CD4-positive, alpha-beta memory T cell (primary cell): ENCODE measurements at regions of chr6 and their contacts with region 1.

Region 1: GRCh38 chr6:105992315-105992961 is 93.7 kb upstream of the PRDM1 start:
- DNase-seq: peak; percentile 89 to 91 (median 91)
- H3K4me3 ChIP-seq: peak overlapping the region; percentile 68 to 90
- H3K4me3 Mint-ChIP-seq: peak overlapping the region; percentile 88 to 98 (median 96)
- H3K27ac ChIP-seq: peak overlapping the region; percentile 72
- H3K27ac Mint-ChIP-seq: peak overlapping the region; percentile 87 to 98 (median 96)
- H3K4me1 ChIP-seq: peaks cover 36% of the 10 kb centered on the region
- H3K4me1 Mint-ChIP-seq: peaks cover 26 to 56% (median 30%) of the 10 kb centered on the region in 4 donors
- H3K27me3 ChIP-seq: peaks cover 4% of the 10 kb centered on the region
- H3K27me3 Mint-ChIP-seq: peaks cover 5 to 12% of the 10 kb centered on the region in 2 donors

Region 2: DNA sequence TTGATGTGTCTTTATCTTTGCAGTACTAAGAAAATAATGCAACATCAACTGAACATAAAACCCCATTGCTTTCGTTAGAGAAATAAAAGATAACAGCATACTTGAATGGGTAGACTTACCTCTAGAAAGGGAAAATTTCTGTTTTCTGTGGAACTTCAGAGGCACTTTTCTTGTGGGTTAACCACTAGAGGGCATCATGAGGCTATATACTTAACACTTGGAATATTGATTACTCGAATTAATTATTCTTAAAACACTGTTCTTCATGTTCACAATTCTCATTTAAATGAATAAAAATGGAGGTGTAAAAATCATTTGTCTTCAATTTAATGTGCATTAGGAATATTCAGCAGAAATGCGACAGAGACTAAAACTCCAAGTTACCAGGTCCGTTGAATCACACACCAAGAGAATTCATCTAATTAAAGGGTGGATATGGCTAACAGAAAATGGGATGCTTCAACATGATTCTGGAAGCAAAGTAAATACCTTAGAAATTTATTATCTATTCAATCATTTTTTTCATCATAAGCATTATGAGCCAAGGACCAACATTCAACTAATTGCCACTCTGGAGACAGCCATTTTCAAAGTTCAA is 258.8 kb before region 1 on chr6:
- CTCF ChIA-PET with region 1: interaction called, 6 read pairs
- POLR2A ChIA-PET with region 1: no interaction called
- intact Hi-C with region 1: loop called (anchors 5 kb)
- DNase-seq: peak in 4 of 5 donors; percentile 39 to 48 (median 42)
- H3K4me3 ChIP-seq: no peak overlapping the region
- H3K4me3 Mint-ChIP-seq: no peak overlapping the region
- H3K27ac ChIP-seq: no peak overlapping the region
- H3K27ac Mint-ChIP-seq: peak overlapping the region in 1 of 7 donors; percentile 21
- H3K4me1 ChIP-seq: no peaks in the 10 kb centered on the region
- H3K4me1 Mint-ChIP-seq: peaks cover 5 to 12% (median 8%) of the 10 kb centered on the region in 4 donors
- H3K27me3 ChIP-seq: no peaks in the 10 kb centered on the region
- H3K27me3 Mint-ChIP-seq: no peaks in the 10 kb centered on the region

Region 3: GRCh38 chr6:105892577-105893262 is 99.7 kb before region 1 on chr6:
- CTCF ChIA-PET with region 1: no interaction called
- POLR2A ChIA-PET with region 1: no interaction called
- intact Hi-C with region 1: no loop called
- DNase-seq: no peak
- H3K4me3 ChIP-seq: no peak overlapping the region
- H3K4me3 Mint-ChIP-seq: no peak overlapping the region
- H3K27ac ChIP-seq: no peak overlapping the region
- H3K27ac Mint-ChIP-seq: no peak overlapping the region
- H3K4me1 ChIP-seq: no peaks in the 10 kb centered on the region
- H3K4me1 Mint-ChIP-seq: no peaks in the 10 kb centered on the region
- H3K27me3 ChIP-seq: no peaks in the 10 kb centered on the region
- H3K27me3 Mint-ChIP-seq: no peaks in the 10 kb centered on the region

Region 4: GRCh38 chr6:106056060-106056745 is 63.8 kb after region 1 on chr6:
- CTCF ChIA-PET with region 1: interaction called, 10 read pairs
- POLR2A ChIA-PET with region 1: interaction called, 28 read pairs
- intact Hi-C with region 1: no loop called
- DNase-seq: peak; percentile 42 to 65 (median 59)
- H3K4me3 ChIP-seq: peak overlapping the region in 1 of 2 donors; percentile 46
- H3K4me3 Mint-ChIP-seq: peak overlapping the region; percentile 37 to 81 (median 70)
- H3K27ac ChIP-seq: no peak overlapping the region
- H3K27ac Mint-ChIP-seq: peak overlapping the region; percentile 6 to 86 (median 33)
- H3K4me1 ChIP-seq: peaks cover 33% of the 10 kb centered on the region
- H3K4me1 Mint-ChIP-seq: peaks cover 17 to 32% (median 27%) of the 10 kb centered on the region in 4 donors
- H3K27me3 ChIP-seq: no peaks in the 10 kb centered on the region
- H3K27me3 Mint-ChIP-seq: no peaks in the 10 kb centered on the region

Region 5: DNA sequence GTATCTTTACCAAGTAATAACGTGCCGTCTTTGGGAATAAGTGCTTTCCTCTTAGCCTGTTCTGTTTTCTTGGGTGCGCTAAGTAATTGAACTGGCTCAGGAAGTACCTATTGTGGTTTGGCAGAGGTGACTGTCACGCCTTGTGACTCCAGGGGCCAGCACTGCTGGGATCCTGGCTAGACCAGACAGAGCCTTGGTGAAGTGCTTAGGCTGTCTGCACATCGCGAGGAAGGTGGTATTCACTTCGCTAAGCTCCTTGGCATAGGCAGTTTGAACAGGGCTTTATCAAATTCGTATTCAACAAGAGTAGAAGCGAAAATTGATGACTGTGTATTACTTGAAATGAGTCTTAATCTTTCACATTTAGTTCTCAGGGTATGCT is 111.3 kb after region 1 on chr6:
- CTCF ChIA-PET with region 1: interaction called, 6 read pairs
- POLR2A ChIA-PET with region 1: interaction called, 177 read pairs
- intact Hi-C with region 1: loop called (anchors 1 kb)
- DNase-seq: peak; percentile 50 to 86 (median 51)
- H3K4me3 ChIP-seq: peak overlapping the region; percentile 86 to 89
- H3K4me3 Mint-ChIP-seq: peak overlapping the region; percentile 95 to 99 (median 97)
- H3K27ac ChIP-seq: peak overlapping the region; percentile 69
- H3K27ac Mint-ChIP-seq: peak overlapping the region; percentile 91 to 98 (median 95)
- H3K4me1 ChIP-seq: peaks cover 75% of the 10 kb centered on the region
- H3K4me1 Mint-ChIP-seq: peaks cover 50 to 86% (median 68%) of the 10 kb centered on the region in 4 donors
- H3K27me3 ChIP-seq: no peaks in the 10 kb centered on the region
- H3K27me3 Mint-ChIP-seq: no peaks in the 10 kb centered on the region

Region 6: DNA sequence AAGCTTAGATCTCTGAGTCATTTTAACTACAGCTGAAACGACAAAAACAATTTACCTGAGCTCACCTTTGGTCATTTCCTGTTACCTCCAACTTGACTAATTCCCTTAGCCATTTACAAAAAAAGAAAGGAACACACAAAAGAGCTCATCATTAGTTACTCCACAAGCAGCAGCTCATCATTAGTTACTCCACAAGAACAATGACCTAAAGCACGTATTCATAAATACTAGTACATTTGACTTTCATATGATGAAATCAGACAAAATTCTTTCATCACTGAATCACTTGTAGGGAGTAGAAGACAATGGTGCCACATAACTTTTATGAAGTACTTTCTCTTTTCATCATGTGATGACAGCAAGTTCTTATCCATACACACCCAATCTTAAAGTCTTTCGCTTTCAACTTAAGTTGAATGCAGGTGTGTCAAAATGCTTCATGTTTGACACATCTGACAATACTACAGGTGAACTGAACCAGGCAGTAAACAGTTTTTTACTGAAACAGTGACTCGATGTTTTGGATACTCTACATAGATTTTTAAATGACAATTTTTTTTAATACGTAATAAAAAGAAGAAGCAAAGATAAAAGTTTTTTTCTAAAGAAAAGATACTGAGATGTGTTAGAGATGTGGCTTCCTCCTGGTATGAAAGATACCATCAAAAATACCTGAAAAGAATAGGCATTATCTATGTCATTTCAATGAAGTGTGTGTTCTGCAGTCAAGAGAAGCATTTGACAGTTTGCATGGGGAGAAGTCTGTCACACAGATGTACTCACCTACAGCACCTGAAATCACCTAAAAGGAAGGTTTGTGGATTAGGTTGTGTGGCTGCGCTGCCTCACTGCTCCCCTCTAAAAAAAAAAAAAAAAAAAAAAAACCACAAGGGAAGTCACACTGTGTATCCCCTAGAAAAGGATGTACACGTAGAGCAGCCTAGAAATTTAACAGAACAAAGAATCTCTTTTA is 202.8 kb after region 1 on chr6:
- CTCF ChIA-PET with region 1: interaction called, 3 read pairs
- POLR2A ChIA-PET with region 1: interaction called, 8 read pairs
- intact Hi-C with region 1: loop called (anchors 2 kb)
- DNase-seq: peak; percentile 56 to 68 (median 59)
- H3K4me3 ChIP-seq: peak overlapping the region in 1 of 2 donors; percentile 14
- H3K4me3 Mint-ChIP-seq: peak overlapping the region; percentile 53 to 81 (median 73)
- H3K27ac ChIP-seq: peak overlapping the region; percentile 17
- H3K27ac Mint-ChIP-seq: peak overlapping the region; percentile 86 to 95 (median 88)
- H3K4me1 ChIP-seq: peaks cover 47% of the 10 kb centered on the region
- H3K4me1 Mint-ChIP-seq: peaks cover 29 to 51% (median 37%) of the 10 kb centered on the region in 4 donors
- H3K27me3 ChIP-seq: no peaks in the 10 kb centered on the region
- H3K27me3 Mint-ChIP-seq: no peaks in the 10 kb centered on the region

Region 7: GRCh38 chr6:106519460-106520394 is 527.3 kb after region 1 on chr6:
- CTCF ChIA-PET with region 1: no interaction called
- POLR2A ChIA-PET with region 1: interaction called, 4 read pairs
- intact Hi-C with region 1: loop called (anchors 2 kb)
- DNase-seq: peak; percentile 76 to 95 (median 79)
- H3K4me3 ChIP-seq: peak overlapping the region; percentile 58 to 61
- H3K4me3 Mint-ChIP-seq: peak overlapping the region; percentile 92 to 98 (median 94)
- H3K27ac ChIP-seq: peak overlapping the region; percentile 78
- H3K27ac Mint-ChIP-seq: peak overlapping the region; percentile 94 to 98 (median 98)
- H3K4me1 ChIP-seq: peaks cover 66% of the 10 kb centered on the region
- H3K4me1 Mint-ChIP-seq: peaks cover 34 to 74% (median 46%) of the 10 kb centered on the region in 4 donors
- H3K27me3 ChIP-seq: no peaks in the 10 kb centered on the region
- H3K27me3 Mint-ChIP-seq: no peaks in the 10 kb centered on the region